A673 (cell line): ENCODE measurements at regions of chr5 and their contacts with region 1.

Region 1: GRCh38 chr5:138575194-138576015 is at the start of gene HSPA9:
- DNase-seq: peak; percentile 99
- H3K4me3 ChIP-seq: peak within 1 kb of the TSS; percentile 84
- H3K27ac ChIP-seq: peak within 1 kb of the TSS; percentile 100
- H3K4me1 ChIP-seq: peaks cover 17% of the 10 kb centered on the region
- H3K27me3 ChIP-seq: no peaks in the 10 kb centered on the region
- CTCF ChIP-seq: no peak
- total RNA-seq, gene HSPA9: 502 TPM in 2 replicates

Region 2: DNA sequence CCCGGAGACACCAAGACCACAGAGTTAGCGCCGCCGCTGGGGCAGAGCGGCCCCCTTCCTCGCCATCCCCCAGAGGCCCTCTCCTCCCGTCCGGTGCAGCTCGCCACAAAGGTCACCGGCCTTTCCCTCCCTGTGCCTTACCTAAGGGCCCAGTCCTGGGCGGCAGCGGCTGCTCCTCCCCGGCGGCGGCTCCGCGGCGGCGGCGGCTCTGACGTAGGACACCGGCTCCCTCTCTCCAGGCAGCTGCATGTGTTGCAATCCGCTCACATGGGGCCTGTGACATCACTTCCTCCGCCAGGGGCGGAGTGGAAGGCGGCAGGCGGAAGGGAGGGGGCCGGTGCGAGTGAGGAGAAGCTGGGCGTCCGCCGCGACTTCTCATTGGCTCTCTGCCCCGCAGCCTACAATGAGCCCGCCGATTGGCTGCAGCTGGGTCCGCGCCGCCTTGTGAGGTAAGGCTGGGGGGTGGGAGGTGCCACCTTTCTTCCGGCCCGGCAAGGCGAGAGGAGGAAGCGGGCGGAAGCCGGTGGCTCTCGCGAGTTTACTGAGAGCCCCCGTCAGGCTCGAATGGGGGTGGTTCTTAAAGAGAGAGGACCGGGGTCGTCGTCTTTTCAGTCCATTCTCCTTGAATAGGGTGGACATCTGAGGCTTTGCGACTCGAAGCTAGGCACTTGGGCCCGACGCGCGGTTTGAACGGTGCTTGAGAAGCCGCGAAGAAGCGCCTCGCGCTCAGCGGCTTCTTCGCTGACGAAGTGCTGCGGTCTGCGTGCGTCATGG is 32.3 kb before region 1 on chr5 and contains the start of gene ETF1:
- CTCF ChIA-PET with region 1: no interaction called
- POLR2A ChIA-PET with region 1: interaction called, 3 read pairs
- intact Hi-C with region 1: loop called (anchors 2 kb)
- DNase-seq: peak; percentile 100
- H3K4me3 ChIP-seq: peak within 1 kb of the TSS; percentile 87
- H3K27ac ChIP-seq: peak within 1 kb of the TSS; percentile 99
- H3K4me1 ChIP-seq: peaks cover 28% of the 10 kb centered on the region
- H3K27me3 ChIP-seq: no peaks in the 10 kb centered on the region
- CTCF ChIP-seq: no peak
- total RNA-seq, gene ETF1: 172 and 191 TPM in 2 replicates

Region 3: GRCh38 chr5:138632900-138633489 is 57.6 kb after region 1 on chr5:
- CTCF ChIA-PET with region 1: interaction called, 4 read pairs
- POLR2A ChIA-PET with region 1: no interaction called
- intact Hi-C with region 1: loop called (anchors 2 kb)
- DNase-seq: peak; percentile 91
- H3K4me3 ChIP-seq: no peak overlapping the region
- H3K27ac ChIP-seq: no peak overlapping the region
- H3K4me1 ChIP-seq: no peaks in the 10 kb centered on the region
- H3K27me3 ChIP-seq: no peaks in the 10 kb centered on the region
- CTCF ChIP-seq: peak; percentile 70

Region 4: DNA sequence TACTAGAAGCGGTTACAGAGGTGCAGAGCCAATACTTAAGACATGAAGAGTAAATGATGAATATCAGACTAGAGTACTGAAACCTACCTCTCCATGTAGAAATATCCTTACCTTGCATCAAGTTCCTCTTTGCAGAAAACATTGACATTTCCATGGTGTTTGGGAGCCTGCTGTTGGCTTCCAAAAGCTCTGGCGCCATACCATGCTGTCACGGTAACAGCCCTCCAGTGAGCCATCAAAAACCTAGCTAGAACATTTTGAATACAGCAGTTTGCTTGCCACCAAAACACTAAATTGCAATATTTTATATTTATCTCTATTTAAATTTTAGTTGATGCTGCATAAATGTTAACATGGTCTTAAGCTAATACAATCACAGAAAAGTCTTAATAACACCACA is 443.8 kb after region 1 on chr5:
- CTCF ChIA-PET with region 1: no interaction called
- POLR2A ChIA-PET with region 1: interaction called, 13 read pairs
- intact Hi-C with region 1: no loop called
- DNase-seq: no peak
- H3K4me3 ChIP-seq: no peak overlapping the region
- H3K27ac ChIP-seq: no peak overlapping the region
- H3K4me1 ChIP-seq: no peaks in the 10 kb centered on the region
- H3K27me3 ChIP-seq: no peaks in the 10 kb centered on the region
- CTCF ChIP-seq: no peak

Region 5: DNA sequence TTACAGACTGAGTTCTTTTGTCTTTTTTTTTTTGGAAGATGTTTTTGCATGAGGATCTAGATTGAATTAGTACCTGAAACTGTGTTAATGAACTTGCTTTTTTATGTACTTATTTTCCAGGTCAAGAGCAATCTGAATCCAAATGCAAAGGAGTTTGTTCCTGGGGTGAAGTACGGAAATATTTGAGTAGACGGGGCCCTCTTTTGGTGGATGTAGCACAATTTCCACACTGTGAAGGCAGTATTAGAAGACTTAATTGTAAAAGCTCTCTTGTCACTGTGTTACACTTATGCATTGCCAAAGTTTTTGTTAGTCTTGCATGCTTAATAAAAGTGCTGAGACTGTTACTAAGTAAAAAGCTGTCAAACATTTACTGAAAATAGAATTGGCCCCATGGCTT is 793.2 kb after region 1 on chr5:
- CTCF ChIA-PET with region 1: interaction called, 12 read pairs
- POLR2A ChIA-PET with region 1: no interaction called
- intact Hi-C with region 1: no loop called
- DNase-seq: peak; percentile 39
- H3K4me3 ChIP-seq: no peak overlapping the region
- H3K27ac ChIP-seq: no peak overlapping the region
- H3K4me1 ChIP-seq: no peaks in the 10 kb centered on the region
- H3K27me3 ChIP-seq: no peaks in the 10 kb centered on the region
- CTCF ChIP-seq: peak; percentile 36